Heart left ventricle (tissue), 16 donors: ENCODE measurements at regions of chr14 and their contacts with region 1.

Region 1: GRCh38 chr14:61837336-61838229 is 75.4 kb downstream of the SNAPC1 start:
- DNase-seq: peak; percentile 65 to 80 (median 76)
- ATAC-seq: peak; percentile 78 to 95 (median 94)
- H3K4me3 ChIP-seq: no peak overlapping the region
- H3K27ac ChIP-seq: no peak overlapping the region
- H3K4me1 ChIP-seq: peaks cover 0 to 7% (median 0%) of the 10 kb centered on the region in 12 donors
- H3K27me3 ChIP-seq: peaks cover 0 to 4% (median 0%) of the 10 kb centered on the region in 9 donors
- CTCF ChIP-seq: peak; percentile 90 to 99 (median 95)
- POLR2A ChIP-seq: no peak

Region 2: DNA sequence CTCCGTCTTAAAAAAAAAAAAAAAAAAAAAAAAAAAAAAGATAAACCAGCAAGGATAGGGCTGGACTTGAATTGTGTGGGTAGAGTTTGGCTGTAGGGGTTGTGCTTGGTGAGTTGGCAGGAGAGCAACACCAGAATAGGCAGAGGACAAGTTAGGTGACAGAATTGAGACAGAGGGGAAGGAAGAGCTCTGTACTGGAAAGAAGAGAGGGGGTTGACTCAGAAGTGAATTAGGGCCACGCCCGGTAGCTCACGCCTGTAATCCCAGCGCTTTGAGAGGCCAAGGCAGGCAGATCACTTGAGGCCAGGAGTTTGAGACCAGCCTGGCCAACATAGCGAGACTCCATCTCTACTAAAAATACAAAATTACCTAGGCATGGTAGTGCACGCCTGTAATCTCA is 550.4 kb before region 1 on chr14:
- intact Hi-C with region 1: loop called in 4 of 10 experiments (anchors 5 to 10 kb)
- DNase-seq: no peak
- ATAC-seq: no peak
- H3K4me3 ChIP-seq: no peak overlapping the region
- H3K27ac ChIP-seq: no peak overlapping the region
- H3K4me1 ChIP-seq: peaks cover 0 to 7% (median 0%) of the 10 kb centered on the region in 12 donors
- H3K27me3 ChIP-seq: peaks cover 0 to 19% (median 0%) of the 10 kb centered on the region in 9 donors
- CTCF ChIP-seq: no peak
- POLR2A ChIP-seq: no peak

Region 3: GRCh38 chr14:61456720-61457119 is 380.9 kb before region 1 on chr14:
- intact Hi-C with region 1: loop called in 9 of 10 experiments (anchors 1 to 5 kb)
- DNase-seq: peak in 4 of 5 donors; percentile 81 to 90 (median 85)
- ATAC-seq: peak in 3 of 4 donors; percentile 76 to 83 (median 78)
- H3K4me3 ChIP-seq: no peak overlapping the region
- H3K27ac ChIP-seq: no peak overlapping the region
- H3K4me1 ChIP-seq: peaks cover 0 to 38% (median 13%) of the 10 kb centered on the region in 12 donors
- H3K27me3 ChIP-seq: no peaks in the 10 kb centered on the region
- CTCF ChIP-seq: peak; percentile 78 to 94 (median 88)
- POLR2A ChIP-seq: no peak

Region 4: DNA sequence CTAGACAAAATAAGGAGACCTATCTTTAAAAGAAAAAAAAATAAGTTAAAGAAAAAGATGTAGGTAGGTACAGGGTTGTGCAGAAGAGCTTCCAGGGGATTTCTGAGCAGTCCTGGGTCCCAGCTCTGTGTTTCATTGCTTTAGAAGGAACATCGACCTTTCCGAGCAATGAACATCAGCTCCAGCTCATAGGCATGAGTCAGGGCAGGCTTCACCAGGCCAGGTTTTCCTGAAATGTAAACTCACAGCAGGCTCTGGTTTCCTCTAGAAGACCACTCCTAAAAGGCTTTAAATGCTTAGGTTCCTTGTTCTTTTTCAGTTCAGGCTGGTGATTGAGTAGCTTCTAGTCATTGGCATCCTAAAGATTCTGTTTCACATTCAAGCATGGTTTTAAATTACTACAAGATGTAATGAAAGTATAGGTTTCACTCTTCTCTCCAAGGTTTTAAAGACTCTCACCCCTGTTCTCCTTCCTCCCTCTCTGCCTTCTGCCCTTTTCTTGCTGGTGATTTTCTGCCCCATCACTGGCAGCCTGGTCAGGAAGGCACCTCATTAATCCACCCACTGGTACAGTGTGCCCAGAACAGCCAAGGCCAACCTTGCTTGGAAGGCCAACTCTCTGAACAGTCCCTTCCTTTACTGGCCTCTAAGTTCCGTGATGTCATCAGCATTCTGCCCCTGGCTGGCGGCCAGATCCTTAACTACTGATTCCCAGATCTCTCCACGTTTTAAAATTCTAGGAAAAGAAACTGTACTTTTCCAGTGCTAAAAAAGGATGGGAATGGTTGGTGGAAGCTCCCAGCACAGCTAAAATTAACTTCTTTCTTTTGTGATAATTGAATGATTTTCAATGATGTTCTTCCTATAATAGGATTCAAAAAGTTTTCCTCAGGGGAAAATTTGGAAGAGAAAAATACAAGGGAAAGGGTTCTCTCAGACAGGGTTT is 251.7 kb before region 1 on chr14:
- intact Hi-C with region 1: loop called in 1 of 10 experiments (anchors 10 kb)
- DNase-seq: peak; percentile 78 to 84 (median 81)
- ATAC-seq: peak; percentile 83 to 89 (median 86)
- H3K4me3 ChIP-seq: no peak overlapping the region
- H3K27ac ChIP-seq: peak overlapping the region; percentile 49 to 88 (median 65)
- H3K4me1 ChIP-seq: peaks cover 8 to 71% (median 32%) of the 10 kb centered on the region in 12 donors
- H3K27me3 ChIP-seq: no peaks in the 10 kb centered on the region
- CTCF ChIP-seq: no peak
- POLR2A ChIP-seq: no peak

Region 5: DNA sequence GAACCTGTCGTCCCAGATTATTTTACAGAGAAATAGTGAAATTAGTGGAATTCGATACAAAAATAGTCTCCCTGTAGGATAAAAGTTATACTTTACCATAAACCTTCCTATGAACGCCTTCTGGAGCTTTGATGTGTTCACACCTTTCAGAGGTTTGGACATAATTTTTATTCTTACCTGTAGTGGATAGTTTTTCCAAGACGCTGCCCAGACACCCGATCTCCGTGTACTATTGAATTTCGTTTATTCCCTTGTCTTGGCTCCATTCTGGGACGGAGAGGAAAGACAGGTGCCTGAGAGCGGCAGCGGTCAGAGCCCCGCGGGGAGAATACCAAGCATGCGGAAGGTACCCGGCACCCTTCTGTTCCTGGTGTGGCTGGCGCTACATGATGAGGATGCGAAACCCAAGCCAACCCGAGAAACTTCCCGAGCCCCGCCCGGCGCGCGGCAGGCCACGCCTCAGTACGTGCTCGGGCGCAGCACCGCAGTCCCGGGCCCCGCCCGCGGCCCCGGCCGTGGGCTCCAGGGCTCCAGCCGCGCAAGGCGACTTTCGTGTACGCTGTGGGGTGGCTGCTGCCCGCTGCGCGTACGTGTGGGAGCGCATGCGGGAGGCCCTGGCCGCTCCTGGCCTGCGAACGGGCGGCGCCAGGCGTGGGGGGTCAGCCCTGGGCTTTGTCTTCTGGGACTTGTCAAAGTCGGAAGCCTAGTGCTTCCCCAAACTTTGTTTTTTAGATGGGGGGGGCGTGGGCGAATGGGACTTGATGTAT is 86.7 kb before region 1 on chr14:
- intact Hi-C with region 1: loop called in 1 of 10 experiments (anchors 10 kb)
- DNase-seq: peak; percentile 89 to 94 (median 91)
- ATAC-seq: peak; percentile 95 to 98 (median 97)
- H3K4me3 ChIP-seq: peak overlapping the region; percentile 37 to 73 (median 65)
- H3K27ac ChIP-seq: peak overlapping the region; percentile 65 to 94 (median 92)
- H3K4me1 ChIP-seq: peaks cover 0 to 53% (median 22%) of the 10 kb centered on the region in 12 donors
- H3K27me3 ChIP-seq: no peaks in the 10 kb centered on the region
- CTCF ChIP-seq: no peak
- POLR2A ChIP-seq: peak in 1 of 2 donors; percentile 88